Activated CD4-positive, alpha-beta T cell treated with anti-CD3 and anti-CD28 coated beads, Interleukin-2, amount 10 ng/mL, durations not matched to agents 24 days and 14 days (primary cell): ENCODE measurements at regions of chr5 and their contacts with region 1.

Region 1: DNA sequence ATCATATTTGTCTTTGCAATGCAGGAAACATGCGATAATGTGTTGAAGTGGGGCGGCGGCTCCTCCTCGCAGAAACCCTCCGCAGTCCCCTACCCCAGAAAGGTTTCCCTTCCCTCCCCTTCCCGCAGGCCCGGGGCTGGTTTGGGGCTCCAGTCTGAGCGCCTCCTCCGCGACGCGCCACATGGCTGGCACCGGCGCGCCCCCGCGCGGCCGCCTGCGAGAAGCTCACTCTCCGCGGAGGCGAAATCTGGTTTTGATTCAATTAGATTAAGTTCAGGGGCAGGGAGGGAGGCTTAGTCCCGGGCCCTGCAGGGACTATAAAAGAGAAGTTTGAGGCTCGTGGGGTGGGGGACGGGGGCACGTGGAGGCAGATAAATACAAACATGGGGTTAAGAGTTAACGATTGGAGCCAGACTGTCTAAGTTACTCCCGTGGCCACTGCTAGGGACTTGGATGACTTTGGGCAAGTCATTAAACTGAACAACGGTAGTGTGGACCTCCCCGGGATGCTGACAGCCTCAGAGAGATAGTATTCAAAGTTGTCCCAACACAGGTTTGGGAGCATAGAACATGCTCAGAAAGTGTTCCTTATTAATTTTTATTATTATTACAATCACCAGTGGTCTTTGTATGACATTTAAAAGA is 69.4 kb downstream of the MSX2 start:
- DNase-seq: peak; percentile 85
- H3K4me3 Mint-ChIP-seq: no peak overlapping the region
- H3K27ac Mint-ChIP-seq: no peak overlapping the region
- H3K4me1 Mint-ChIP-seq: peaks cover 7% of the 10 kb centered on the region
- H3K27me3 Mint-ChIP-seq: peaks cover 13% of the 10 kb centered on the region

Region 2: DNA sequence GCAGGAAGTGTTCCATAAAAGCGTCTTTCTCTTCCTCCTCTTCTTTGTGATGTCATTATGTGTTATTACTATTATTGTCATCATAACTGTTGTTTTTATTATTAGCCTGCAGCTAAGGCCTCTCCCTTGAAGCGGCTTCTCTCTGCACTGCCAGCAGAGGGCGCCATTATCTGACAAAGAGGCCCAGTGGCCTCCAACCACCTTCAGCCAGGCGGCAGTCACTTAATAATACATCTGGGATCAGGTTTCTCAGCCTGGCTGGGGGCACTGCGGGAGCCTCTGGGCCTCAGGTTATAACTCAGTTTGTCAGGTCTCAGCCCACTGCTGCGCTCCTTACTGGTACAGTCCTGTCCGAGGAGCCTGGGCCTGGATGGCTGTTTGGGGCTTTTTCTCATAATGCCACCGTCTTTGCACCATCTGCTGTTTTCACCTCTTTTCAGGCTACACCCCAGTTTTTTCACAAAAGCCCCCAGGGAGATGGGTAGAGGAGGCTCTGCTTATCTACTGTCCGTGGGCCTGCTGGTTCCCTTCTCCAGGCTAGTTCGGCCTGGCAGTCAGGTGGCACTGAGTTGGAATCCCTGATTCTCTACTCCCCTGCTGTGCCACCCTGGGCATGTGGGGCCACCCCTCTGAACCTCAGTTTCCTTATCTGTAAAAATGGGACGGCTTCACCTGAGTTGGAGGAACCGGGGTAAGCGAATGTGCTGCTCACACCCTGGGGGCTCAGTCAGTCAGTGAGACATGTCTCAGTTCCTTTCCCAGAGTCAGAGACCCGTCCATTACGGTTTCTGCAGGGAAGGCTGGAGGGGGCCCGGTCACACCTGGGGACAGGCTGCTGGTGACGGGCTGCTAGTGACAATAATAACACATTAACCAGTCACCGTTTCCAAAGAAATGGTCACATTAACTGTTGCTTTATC is 466.2 kb before region 1 on chr5:
- intact Hi-C with region 1: loop called (anchors 5 kb)
- DNase-seq: peak; percentile 85
- H3K4me3 Mint-ChIP-seq: no peak overlapping the region
- H3K27ac Mint-ChIP-seq: no peak overlapping the region
- H3K4me1 Mint-ChIP-seq: peaks cover 3% of the 10 kb centered on the region
- H3K27me3 Mint-ChIP-seq: peaks cover 4% of the 10 kb centered on the region

Region 3: GRCh38 chr5:174418928-174419796 is 374.6 kb before region 1 on chr5:
- intact Hi-C with region 1: loop called (anchors 1 kb)
- DNase-seq: peak; percentile 93
- H3K4me3 Mint-ChIP-seq: peak overlapping the region; percentile 39
- H3K27ac Mint-ChIP-seq: no peak overlapping the region
- H3K4me1 Mint-ChIP-seq: peaks cover 2% of the 10 kb centered on the region
- H3K27me3 Mint-ChIP-seq: peaks cover 5% of the 10 kb centered on the region